Activated B cell treated with CpG ODN at 0.5 μM for 24 hours (primary cell): ENCODE measurements at regions of chr15 and their contacts with region 1.

Region 1: DNA sequence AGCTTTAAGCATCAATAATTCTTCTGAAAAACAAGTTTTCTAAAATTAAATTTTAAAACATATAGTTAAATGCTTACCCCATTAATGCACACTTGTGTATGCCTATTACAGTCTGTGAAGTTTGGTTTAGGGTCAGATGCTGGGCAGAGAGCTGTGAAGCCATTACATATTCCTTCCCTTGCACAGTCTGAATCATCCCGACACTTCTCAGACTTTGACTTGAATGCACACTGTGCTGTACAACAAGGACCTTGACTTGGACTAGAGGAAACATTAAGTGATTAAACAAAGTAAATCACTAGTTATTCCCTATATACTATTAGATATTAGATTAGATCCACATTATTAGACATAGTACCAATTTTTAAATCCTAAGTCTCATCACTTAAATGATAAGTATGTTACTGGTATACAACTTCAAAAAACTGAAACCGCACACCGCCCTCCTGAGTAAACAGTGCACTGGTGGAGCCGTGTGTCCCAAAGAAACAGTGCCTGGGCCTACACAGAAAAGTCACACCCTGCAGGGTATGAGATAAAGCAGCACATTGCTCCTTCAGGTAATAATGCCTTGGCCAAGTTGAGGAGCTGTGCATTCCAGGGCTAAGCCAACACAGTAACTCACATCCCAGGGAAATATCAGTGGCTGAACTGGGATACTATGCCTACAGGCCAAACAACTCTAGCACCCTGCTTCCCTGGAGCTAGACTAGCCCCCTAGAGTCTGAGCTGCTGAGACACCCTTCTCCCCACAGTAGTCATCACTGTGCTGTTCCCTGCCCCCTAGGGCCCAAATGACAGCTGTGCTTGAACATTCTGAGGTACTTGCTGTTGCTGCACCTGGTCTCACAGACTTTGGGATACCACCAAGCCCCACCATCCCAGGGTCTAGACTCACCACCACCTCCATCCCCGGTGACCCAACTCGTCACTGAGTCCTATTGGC is 137.5 kb downstream of the ADAM10 start:
- DNase-seq: no peak
- ATAC-seq: no peak
- H3K4me3 Mint-ChIP-seq: no peak overlapping the region
- H3K27ac Mint-ChIP-seq: no peak overlapping the region
- H3K4me1 Mint-ChIP-seq: peaks cover 4% of the 10 kb centered on the region
- H3K27me3 Mint-ChIP-seq: no peaks in the 10 kb centered on the region
- CTCF ChIP-seq: no peak

Region 2: GRCh38 chr15:58517682-58518525 is 94.1 kb before region 1 on chr15:
- CTCF ChIA-PET with region 1: no interaction called
- POLR2A ChIA-PET with region 1: no interaction called
- intact Hi-C with region 1: no loop called
- DNase-seq: no peak
- ATAC-seq: no peak
- H3K4me3 Mint-ChIP-seq: no peak overlapping the region
- H3K27ac Mint-ChIP-seq: no peak overlapping the region
- H3K4me1 Mint-ChIP-seq: peaks cover 33% of the 10 kb centered on the region
- H3K27me3 Mint-ChIP-seq: no peaks in the 10 kb centered on the region
- CTCF ChIP-seq: no peak

Region 3: GRCh38 chr15:58738046-58738707 is 126.2 kb after region 1 on chr15:
- CTCF ChIA-PET with region 1: no interaction called
- POLR2A ChIA-PET with region 1: interaction called, 13 read pairs
- intact Hi-C with region 1: no loop called
- DNase-seq: no peak
- ATAC-seq: peak; percentile 31
- H3K4me3 Mint-ChIP-seq: no peak overlapping the region
- H3K27ac Mint-ChIP-seq: no peak overlapping the region
- H3K4me1 Mint-ChIP-seq: peaks cover 78% of the 10 kb centered on the region
- H3K27me3 Mint-ChIP-seq: no peaks in the 10 kb centered on the region
- CTCF ChIP-seq: no peak